AG04449 (cell line): ENCODE measurements at regions of chr11 and their contacts with region 1.

Region 1: GRCh38 chr11:61429691-61430582 is at the starts of genes CPSF7 and SDHAF2:
- DNase-seq: peak; percentile 63
- H3K4me3 ChIP-seq: peak within 1 kb of the TSS; percentile 99
- CTCF ChIP-seq: no peak

Region 2: DNA sequence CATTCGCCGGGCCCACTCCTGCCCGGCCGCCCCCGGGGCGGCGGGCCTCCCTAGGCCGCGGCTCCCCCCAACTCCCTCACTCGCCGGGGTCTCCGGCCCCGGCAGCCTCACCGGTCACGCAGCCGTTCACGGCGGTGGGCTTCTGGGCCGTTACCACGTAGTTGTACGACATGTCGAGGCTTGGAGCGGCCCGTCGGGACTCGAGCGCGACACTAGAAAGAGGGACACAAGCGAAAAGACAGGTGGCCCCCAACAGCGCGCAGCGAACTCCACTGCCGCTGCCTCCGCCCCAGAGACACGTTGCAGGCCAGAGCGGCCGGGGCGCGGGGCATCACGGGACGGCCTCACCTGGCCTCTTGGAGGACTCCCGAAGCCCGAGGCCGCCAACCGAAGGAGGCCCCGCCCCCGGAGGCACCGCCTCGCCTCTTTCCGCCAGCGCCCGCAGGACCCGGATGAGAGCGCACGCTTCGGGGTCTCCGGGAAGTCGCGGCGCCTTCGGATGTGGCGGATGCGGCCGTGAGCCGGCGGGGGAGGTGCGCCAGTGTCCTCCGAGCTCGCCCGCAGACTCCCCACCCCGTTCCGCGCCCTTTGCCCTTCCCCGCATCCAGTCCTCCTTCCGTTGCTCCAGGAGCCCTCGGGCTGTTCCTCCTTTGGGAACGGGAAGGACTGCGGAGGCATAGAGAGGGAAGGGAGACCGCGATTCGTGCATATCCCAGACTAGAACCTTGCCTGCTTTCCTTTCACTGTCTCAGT is 97.0 kb before region 1 on chr11 and contains the starts of genes DDB1 and TKFC:
- CTCF ChIA-PET with region 1: interaction called, 13 read pairs
- POLR2A ChIA-PET with region 1: no interaction called
- DNase-seq: no peak
- H3K4me3 ChIP-seq: peak within 1 kb of the TSS; percentile 95
- CTCF ChIP-seq: no peak

Region 3: DNA sequence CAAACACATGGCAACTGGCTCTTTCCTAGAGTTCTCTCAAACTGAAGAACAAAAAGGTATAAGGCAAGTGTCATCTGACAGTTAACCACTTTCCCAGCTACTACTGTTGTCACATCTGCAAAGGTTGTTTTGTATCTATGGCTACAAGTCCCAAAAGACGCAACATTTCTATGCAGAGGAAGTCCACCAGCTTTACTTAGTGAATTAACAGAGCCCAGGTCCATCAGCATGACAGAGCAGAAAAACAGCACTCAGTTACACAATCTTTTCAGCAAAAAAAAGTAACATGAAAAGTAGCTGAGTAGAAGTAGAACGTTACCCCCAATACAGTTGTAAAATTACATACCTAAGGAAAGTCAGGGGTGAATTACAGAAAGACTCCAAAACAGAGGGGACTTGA is 12.3 kb before region 1 on chr11:
- CTCF ChIA-PET with region 1: interaction called, 10 read pairs
- POLR2A ChIA-PET with region 1: interaction called, 3 read pairs
- DNase-seq: no peak
- H3K4me3 ChIP-seq: no peak overlapping the region
- CTCF ChIP-seq: no peak

Region 4: DNA sequence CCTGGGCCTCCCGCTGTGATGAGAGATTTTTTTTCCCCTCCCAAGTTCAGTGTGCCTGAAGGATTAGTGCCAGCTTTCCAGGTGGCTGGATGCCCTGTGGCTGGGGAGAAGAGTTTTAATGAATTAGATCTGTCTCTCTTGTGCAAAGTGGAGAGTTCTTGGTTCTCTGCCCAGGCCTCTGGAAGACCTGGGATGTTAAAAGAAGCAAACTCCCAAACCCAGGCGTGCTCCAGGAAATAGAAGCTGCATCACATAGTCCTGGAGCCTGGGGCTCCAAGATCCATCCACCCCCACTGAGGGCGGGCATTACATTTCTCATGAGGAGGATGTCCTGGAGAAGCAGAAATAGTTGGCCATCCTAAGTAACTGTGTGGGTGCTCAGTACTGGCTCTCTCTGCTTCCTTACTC is 30.5 kb after region 1 on chr11:
- CTCF ChIA-PET with region 1: interaction called, 11 read pairs
- POLR2A ChIA-PET with region 1: no interaction called
- DNase-seq: no peak
- H3K4me3 ChIP-seq: no peak overlapping the region
- CTCF ChIP-seq: no peak

Region 5: GRCh38 chr11:61509043-61510029 is 79.4 kb after region 1 on chr11:
- CTCF ChIA-PET with region 1: no interaction called
- POLR2A ChIA-PET with region 1: no interaction called
- DNase-seq: no peak
- H3K4me3 ChIP-seq: peak overlapping the region; percentile 24
- CTCF ChIP-seq: peak; percentile 44

Region 6: DNA sequence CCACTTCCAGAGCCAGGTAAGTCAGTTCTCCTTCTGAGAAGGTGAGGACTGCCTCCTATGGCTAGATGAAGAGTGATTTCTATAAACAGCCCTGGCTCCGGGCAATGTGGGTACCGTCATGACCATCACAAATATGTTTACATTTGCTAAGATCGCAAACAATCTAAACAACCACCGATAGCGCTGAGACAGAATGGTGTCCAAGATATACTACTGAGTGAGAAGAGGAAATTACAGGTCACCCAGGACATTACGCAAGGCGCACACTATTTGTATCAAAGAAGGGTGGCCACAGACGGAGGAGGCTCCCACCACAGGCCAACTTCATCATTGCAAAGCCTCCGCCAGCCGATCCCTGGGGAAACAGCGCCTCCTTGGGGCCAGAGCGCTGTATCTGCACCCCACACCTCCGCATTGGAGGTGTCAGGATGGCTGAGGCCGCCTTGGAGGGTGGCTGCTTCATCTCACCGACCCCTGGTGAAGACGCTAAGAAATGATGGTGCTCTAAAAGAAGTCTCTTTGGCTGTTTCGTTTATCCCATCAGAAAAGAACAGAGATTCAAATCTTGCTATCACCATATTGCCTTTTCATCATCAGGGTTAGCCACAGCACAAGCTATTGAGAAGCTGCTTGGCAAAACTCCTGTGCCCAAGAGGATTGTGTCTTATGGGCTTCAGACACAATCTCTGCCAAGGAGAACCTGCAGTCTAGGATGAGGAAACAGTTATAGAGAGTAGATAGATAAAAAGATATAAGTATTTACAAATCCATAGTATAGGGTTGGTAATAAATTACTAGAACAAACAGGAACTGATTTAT is 895.0 kb after region 1 on chr11:
- CTCF ChIA-PET with region 1: no interaction called
- POLR2A ChIA-PET with region 1: no interaction called
- DNase-seq: no peak
- H3K4me3 ChIP-seq: no peak overlapping the region
- CTCF ChIP-seq: peak; percentile 53